Activated naive CD4-positive, alpha-beta T cell treated with anti-CD3 and anti-CD28 coated beads for 36 hours (primary cell): ENCODE measurements at regions of chr9 and their contacts with region 1.

Region 1: GRCh38 chr9:137723783-137724445 is 105.1 kb downstream of the EHMT1 start:
- DNase-seq: peak; percentile 50
- H3K4me3 Mint-ChIP-seq: peak overlapping the region; percentile 25
- H3K27ac Mint-ChIP-seq: peak overlapping the region; percentile 90
- H3K4me1 Mint-ChIP-seq: peaks cover 47% of the 10 kb centered on the region
- H3K27me3 Mint-ChIP-seq: no peaks in the 10 kb centered on the region

Region 2: DNA sequence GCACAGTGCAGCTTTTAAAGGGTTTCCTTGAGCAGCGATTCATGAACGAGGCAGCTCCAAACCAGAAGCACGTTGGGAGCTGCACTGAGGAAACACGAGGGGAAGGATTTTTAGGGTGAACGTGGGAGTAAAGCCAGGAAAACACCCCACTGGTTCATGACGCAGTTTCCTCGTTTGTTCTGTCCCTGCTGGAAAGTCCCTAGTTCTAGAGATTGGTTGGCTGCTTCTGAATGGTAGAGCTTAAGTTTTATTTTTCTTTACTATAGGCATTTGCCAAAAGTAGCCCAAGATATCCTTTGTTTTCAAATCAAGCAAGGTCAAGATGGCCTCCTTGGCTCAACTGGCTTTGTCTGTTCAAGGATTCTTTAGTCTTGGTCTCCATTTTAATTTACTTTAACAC is 37.1 kb after region 1 on chr9:
- CTCF ChIA-PET with region 1: interaction called, 3 read pairs
- intact Hi-C with region 1: loop called (anchors 1 kb)
- DNase-seq: peak; percentile 63
- H3K4me3 Mint-ChIP-seq: no peak overlapping the region
- H3K27ac Mint-ChIP-seq: peak overlapping the region; percentile 84
- H3K4me1 Mint-ChIP-seq: peaks cover 40% of the 10 kb centered on the region
- H3K27me3 Mint-ChIP-seq: no peaks in the 10 kb centered on the region

Region 3: GRCh38 chr9:138022121-138022741 is 298.3 kb after region 1 on chr9:
- CTCF ChIA-PET with region 1: no interaction called
- intact Hi-C with region 1: loop called (anchors 2 kb)
- DNase-seq: peak; percentile 42
- H3K4me3 Mint-ChIP-seq: no peak overlapping the region
- H3K27ac Mint-ChIP-seq: no peak overlapping the region
- H3K4me1 Mint-ChIP-seq: peaks cover 4% of the 10 kb centered on the region
- H3K27me3 Mint-ChIP-seq: peaks cover 14% of the 10 kb centered on the region